ENCODE measurements at regions of chr3 and their contacts with region 1.

Region 1: DNA sequence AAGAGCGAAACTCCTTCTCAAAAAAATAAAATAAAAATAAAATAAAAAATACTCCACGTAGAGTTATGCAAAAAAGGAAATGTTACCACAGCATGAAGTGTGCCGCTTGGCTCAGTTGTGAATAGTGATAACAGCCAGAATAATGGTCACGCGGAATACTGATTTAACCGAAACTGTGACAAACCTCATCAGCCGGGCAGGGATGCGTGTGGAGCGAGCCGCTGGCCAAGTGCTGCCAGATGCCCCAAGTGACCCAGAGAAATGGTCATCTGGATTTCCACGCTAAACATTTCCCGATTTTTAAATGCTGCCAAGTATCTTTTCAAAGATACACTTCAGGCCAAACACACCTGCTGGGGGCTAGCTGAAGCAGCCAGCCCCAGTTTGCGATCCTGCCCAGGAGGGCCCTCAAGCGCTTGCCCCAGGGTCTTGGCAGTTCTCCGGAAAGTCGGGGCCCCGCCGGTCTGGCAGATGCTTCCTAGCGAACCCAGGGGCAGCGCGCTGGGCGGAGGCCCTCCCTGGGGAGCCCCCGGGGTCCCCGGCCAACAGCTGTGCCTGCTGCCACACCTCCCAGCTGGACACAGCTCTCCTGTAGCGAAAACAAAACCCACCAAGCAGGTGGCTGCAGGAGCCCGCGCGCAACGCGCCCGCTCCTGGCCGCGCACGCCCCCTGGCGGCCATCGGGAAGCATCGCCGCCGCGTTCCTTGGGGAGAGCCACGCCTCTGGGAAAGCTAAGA is 35.1 kb downstream of the CMTM6 start:
- DNase-seq: peak; percentile 84
- ATAC-seq: peak; percentile 79
- H3K4me3 Mint-ChIP-seq: peak overlapping the region; percentile 56
- H3K27ac Mint-ChIP-seq: peak overlapping the region; percentile 84
- H3K4me1 Mint-ChIP-seq: peaks cover 62% of the 10 kb centered on the region
- H3K27me3 Mint-ChIP-seq: no peaks in the 10 kb centered on the region
- CTCF ChIP-seq: peak; percentile 90

Region 2: DNA sequence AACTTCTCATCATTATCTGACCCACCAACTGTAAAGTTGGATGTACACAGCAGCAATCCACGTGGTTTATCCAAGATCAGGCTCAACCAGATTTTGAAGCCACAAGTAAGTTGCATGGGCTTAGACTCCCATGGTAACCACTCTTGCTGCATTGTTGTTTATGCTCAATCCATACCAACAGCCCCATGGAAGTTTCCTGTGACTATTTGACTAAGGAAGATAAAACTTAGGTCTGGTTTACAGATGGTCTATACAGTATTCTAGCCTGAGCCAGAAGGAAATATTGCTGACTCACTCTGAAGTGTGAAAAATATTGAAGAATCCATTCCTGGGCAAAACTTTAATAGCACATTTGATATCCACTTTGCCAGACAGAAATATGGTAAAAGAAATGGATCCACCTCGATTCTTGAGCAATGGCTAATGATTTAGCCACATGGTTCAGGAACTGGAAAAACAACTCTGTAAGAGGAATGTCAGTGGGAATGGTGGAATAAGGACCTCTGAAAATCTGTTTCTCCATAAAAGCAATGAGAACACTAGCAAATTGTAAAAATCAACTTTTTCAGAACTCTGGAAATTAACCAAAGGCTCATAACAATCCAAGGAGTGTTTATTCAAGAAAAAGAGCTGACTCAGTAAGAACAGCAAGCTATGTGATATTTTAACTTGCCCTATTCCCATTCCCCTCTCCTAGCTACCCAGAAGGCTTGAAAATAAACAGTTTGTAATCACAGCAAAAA is 1097.7 kb before region 1 on chr3:
- CTCF ChIA-PET with region 1: no interaction called
- POLR2A ChIA-PET with region 1: no interaction called
- intact Hi-C with region 1: no loop called
- DNase-seq: no peak
- ATAC-seq: no peak
- H3K4me3 Mint-ChIP-seq: no peak overlapping the region
- H3K27ac Mint-ChIP-seq: no peak overlapping the region
- H3K4me1 Mint-ChIP-seq: no peaks in the 10 kb centered on the region
- H3K27me3 Mint-ChIP-seq: no peaks in the 10 kb centered on the region
- CTCF ChIP-seq: no peak

Region 3: DNA sequence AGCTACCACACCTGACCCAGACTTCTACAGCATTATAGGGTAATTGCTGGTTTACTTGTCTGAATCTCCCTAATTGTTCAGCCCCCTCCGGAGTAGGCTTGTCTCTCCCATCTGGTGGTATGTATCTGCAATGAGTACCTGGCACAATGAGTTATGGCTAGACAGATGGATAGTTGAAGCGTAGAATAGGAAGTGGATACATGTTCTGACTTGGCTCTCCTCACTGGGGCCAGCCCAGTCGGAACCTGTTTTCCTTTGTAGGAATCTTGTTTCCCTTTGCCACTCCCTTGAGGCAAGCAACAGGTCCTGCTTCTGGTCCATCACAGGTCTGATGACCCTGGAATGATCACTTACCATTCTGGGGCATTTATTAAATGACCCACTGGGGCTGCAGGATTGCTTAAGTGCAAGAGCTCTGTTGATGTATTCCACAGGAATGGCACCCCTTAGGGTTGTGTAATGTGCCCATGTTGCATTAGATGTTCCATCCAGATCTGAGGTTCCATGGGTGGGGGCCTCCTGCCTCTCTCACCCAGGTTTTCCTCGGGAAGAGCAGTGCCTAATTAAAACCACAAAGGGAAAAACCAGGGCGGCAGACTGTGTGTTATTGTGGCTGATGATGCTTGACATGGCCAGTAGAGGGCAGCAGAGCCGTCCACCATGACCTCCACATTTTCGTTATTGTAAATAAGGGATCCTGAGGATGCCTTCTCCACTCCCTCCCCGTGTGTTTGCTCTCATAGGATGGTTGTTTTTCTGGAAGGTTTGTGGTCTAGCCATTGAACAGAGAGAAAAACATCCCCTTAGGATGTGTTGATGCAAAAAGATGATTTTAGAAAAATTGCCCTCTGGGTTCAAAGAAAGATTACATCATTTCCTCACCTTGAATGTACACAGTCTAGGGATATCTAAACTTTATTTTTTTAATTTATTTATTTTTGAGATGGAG is 171.0 kb before region 1 on chr3:
- CTCF ChIA-PET with region 1: interaction called, 49 read pairs
- POLR2A ChIA-PET with region 1: interaction called, 3 read pairs
- intact Hi-C with region 1: loop called (anchors 1 kb)
- DNase-seq: peak; percentile 40
- ATAC-seq: peak; percentile 82
- H3K4me3 Mint-ChIP-seq: no peak overlapping the region
- H3K27ac Mint-ChIP-seq: no peak overlapping the region
- H3K4me1 Mint-ChIP-seq: peaks cover 4% of the 10 kb centered on the region
- H3K27me3 Mint-ChIP-seq: no peaks in the 10 kb centered on the region
- CTCF ChIP-seq: peak; percentile 88

Region 4: GRCh38 chr3:32391643-32392535 is 75.6 kb before region 1 on chr3 and contains the start of gene CMTM7:
- CTCF ChIA-PET with region 1: interaction called, 33 read pairs
- POLR2A ChIA-PET with region 1: interaction called, 21 read pairs
- intact Hi-C with region 1: loop called (anchors 1 kb)
- DNase-seq: peak; percentile 65
- ATAC-seq: peak; percentile 64
- H3K4me3 Mint-ChIP-seq: peak within 1 kb of the TSS; percentile 97
- H3K27ac Mint-ChIP-seq: peak within 1 kb of the TSS; percentile 90
- H3K4me1 Mint-ChIP-seq: peaks cover 56% of the 10 kb centered on the region
- H3K27me3 Mint-ChIP-seq: no peaks in the 10 kb centered on the region
- CTCF ChIP-seq: no peak
- total RNA-seq, gene CMTM7: 70.5 and 82.1 TPM in 2 replicates

Region 5: DNA sequence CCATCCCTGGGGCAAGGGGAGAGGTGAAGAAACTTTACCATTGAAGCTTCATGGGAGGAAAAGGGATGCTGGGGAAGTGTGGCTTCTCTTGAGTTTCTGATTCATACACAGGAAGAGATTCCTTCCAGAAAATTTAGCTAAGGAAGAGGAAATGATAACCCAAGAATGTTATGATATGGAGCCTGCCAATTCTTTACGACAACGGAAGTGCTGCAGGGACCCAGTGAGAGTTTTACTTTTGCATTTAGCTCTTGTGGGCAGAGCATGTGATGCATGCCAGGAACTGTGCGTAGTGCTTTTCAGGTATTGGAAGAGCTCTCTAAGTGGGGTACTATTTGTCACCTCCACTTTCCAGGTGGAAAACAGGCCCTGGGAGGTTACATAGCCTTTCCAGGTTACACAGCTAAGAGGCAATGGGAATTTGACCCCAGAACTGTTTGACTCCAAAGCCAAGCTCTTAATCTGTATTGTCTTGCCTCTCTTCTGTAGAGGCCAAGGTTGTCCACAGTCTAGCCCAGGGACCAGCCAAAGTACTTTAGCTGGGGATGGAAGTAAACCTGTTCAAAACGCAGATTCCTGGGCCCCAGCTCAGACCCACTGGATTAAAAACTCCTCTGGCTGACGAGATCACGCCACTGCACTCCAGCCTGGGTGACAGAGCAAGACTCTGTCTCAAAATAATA is 52.8 kb before region 1 on chr3:
- CTCF ChIA-PET with region 1: interaction called, 20 read pairs
- POLR2A ChIA-PET with region 1: interaction called, 21 read pairs
- intact Hi-C with region 1: no loop called
- DNase-seq: no peak
- ATAC-seq: peak; percentile 84
- H3K4me3 Mint-ChIP-seq: peak overlapping the region; percentile 52
- H3K27ac Mint-ChIP-seq: peak overlapping the region; percentile 77
- H3K4me1 Mint-ChIP-seq: peaks cover 66% of the 10 kb centered on the region
- H3K27me3 Mint-ChIP-seq: no peaks in the 10 kb centered on the region
- CTCF ChIP-seq: no peak

Region 6: GRCh38 chr3:32428092-32429068 is 39.1 kb before region 1 on chr3:
- CTCF ChIA-PET with region 1: interaction called, 33 read pairs
- POLR2A ChIA-PET with region 1: interaction called, 12 read pairs
- intact Hi-C with region 1: no loop called
- DNase-seq: no peak
- ATAC-seq: peak; percentile 42
- H3K4me3 Mint-ChIP-seq: peak overlapping the region; percentile 50
- H3K27ac Mint-ChIP-seq: peak overlapping the region; percentile 71
- H3K4me1 Mint-ChIP-seq: peaks cover 88% of the 10 kb centered on the region
- H3K27me3 Mint-ChIP-seq: no peaks in the 10 kb centered on the region
- CTCF ChIP-seq: no peak

Region 7: GRCh38 chr3:32484436-32484835 is 16.9 kb after region 1 on chr3:
- CTCF ChIA-PET with region 1: interaction called, 43 read pairs
- POLR2A ChIA-PET with region 1: interaction called, 6 read pairs
- intact Hi-C with region 1: loop called (anchors 2 kb)
- DNase-seq: no peak
- ATAC-seq: peak; percentile 93
- H3K4me3 Mint-ChIP-seq: peak overlapping the region; percentile 65
- H3K27ac Mint-ChIP-seq: peak overlapping the region; percentile 86
- H3K4me1 Mint-ChIP-seq: peaks cover 57% of the 10 kb centered on the region
- H3K27me3 Mint-ChIP-seq: no peaks in the 10 kb centered on the region
- CTCF ChIP-seq: no peak